ENCODE measurements at regions of chr1 and their contacts with region 1.

Region 1: DNA sequence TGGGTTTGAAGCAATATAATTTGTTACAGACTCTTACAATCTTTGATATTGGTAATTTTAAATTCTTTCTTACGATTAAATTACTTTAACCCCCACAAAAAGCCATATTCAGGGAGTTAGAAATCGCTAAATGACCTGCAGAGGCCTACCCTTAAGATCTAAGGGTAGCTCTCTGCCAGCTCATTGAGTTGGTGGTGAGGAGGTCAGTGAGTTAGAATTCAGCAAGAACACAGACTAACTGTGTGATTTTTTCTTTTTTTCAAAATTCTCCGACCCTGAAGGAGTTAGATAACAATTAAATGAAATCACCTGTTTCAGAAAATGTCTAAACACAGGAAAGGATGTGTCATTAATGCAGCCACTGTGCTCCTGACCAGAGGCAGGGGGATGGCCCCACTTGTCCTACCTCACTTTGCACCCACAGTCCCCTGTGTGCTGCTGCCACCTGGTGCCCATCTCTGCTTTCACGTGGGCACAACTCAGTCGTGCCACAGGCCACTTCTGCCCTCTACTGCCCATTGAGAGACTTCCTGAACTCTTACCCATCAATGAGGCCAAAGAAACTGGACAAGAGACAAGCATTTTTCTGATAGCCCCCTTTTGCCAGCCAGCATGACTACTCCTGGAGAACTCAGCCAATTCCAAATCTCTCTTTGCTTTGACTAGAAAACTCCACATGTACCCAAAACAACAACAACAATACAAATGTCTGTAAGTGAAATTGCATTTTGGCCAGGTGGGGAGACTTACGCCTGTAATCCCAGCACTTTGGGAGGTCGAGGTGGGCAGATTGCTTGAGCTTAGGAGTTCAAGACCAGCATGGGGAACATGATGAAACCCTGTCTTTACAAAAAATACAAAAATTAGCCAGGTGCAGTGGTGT is 8.4 kb downstream of the CFAP45 start:
- DNase-seq: peak; percentile 70 to 97 (median 85)

Region 2: GRCh38 chr1:159780583-159781582 is 110.6 kb before region 1 on chr1 and contains the start of gene DUSP23:
- intact Hi-C with region 1: loop called (anchors 2 kb)
- DNase-seq: peak; percentile 94 to 99 (median 96)

Region 3: DNA sequence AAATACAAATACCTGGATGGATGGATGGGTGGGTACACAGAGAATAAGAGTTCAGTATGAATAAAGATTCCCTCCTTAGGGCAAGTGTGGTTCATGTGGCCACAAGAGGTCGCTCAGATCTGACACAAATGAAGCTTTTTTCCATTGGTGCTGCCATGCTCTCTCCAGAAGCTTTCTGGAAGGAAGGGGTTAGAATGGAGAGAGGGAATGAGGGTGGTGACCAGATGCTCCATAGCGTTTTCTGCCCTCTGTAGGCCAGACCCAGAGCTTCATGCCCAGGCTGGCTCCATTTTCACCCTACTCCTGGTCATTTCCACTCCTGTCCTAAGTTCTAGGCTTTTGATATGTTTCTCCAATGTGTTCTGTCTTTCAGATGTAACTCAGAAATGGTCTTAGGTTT is 92.6 kb before region 1 on chr1:
- intact Hi-C with region 1: loop called (anchors 2 kb)
- DNase-seq: peak in 5 of 10 donors; percentile 36 to 84 (median 48)